Caco-2 (cell line): ENCODE measurements at regions of chr3 and their contacts with region 1.

Region 1: GRCh38 chr3:112990672-112991602 is at the start of gene GTPBP8:
- DNase-seq: peak; percentile 92 to 94
- H3K4me3 ChIP-seq: peak within 1 kb of the TSS; percentile 59
- H3K4me3 Mint-ChIP-seq: peak within 1 kb of the TSS; percentile 87
- H3K27ac Mint-ChIP-seq: peak within 1 kb of the TSS; percentile 94
- H3K4me1 ChIP-seq: peaks cover 16% of the 10 kb centered on the region; the same call in 1 of the 2 replicates
- H3K4me1 Mint-ChIP-seq: peaks cover 15% of the 10 kb centered on the region
- H3K27me3 ChIP-seq: no peaks in the 10 kb centered on the region
- H3K27me3 Mint-ChIP-seq: no peaks in the 10 kb centered on the region
- CTCF ChIP-seq: no peak
- total RNA-seq, gene GTPBP8: 18.3 and 19.5 TPM in 2 replicates

Region 2: GRCh38 chr3:112561731-112562688 is 428.9 kb before region 1 on chr3 and contains the starts of genes ATG3 and SLC35A5:
- CTCF ChIA-PET with region 1: no interaction called
- POLR2A ChIA-PET with region 1: no interaction called
- intact Hi-C with region 1: loop called (anchors 5 kb)
- DNase-seq: peak; percentile 98
- H3K4me3 ChIP-seq: peak within 1 kb of the TSS; percentile 92
- H3K4me3 Mint-ChIP-seq: peak within 1 kb of the TSS; percentile 95
- H3K27ac Mint-ChIP-seq: peak within 1 kb of the TSS; percentile 97
- H3K4me1 ChIP-seq: peaks cover 5% of the 10 kb centered on the region; the same call in 1 of the 2 replicates
- H3K4me1 Mint-ChIP-seq: peaks cover 28% of the 10 kb centered on the region
- H3K27me3 ChIP-seq: no peaks in the 10 kb centered on the region
- H3K27me3 Mint-ChIP-seq: no peaks in the 10 kb centered on the region
- CTCF ChIP-seq: peak in 1 of 2 experiments; percentile 13
- total RNA-seq, gene ATG3: 50.7 and 52.3 TPM in 2 replicates
- total RNA-seq, gene SLC35A5: 18.6 and 19.1 TPM in 2 replicates

Region 3: DNA sequence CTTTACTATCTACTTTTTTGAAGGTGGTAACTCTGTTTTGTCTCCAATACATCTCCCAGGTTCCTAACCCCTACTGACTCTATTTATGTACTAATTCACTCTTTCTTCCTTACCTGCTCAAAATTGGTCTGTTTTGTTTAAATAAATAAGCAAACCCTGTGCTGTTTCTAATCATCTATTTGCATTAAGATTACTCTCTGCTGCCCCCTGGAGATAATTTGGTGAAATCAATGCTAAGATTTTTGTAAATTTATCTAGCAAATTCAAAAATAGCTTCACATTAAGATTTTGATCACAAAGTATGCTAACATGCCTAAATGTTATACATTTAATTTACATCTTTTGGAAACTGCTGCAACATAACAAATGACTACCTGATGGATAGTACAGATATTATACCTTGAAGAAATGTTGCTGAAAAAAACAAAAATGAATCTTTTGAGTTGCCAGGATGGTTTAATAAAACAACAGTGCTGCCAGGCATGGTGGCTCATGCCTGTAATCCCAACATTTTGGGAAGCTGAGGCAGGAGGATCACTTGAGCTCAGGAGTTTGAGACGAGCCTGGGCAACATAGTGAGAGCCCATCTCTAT is 11.6 kb before region 1 on chr3:
- CTCF ChIA-PET with region 1: no interaction called
- POLR2A ChIA-PET with region 1: no interaction called
- intact Hi-C with region 1: no loop called
- DNase-seq: peak in 1 of 2 experiments; percentile 39
- H3K4me3 ChIP-seq: no peak overlapping the region
- H3K4me3 Mint-ChIP-seq: no peak overlapping the region
- H3K27ac Mint-ChIP-seq: no peak overlapping the region
- H3K4me1 ChIP-seq: no peaks in the 10 kb centered on the region
- H3K4me1 Mint-ChIP-seq: peaks cover 6% of the 10 kb centered on the region
- H3K27me3 ChIP-seq: no peaks in the 10 kb centered on the region
- H3K27me3 Mint-ChIP-seq: no peaks in the 10 kb centered on the region
- CTCF ChIP-seq: peak; percentile 55 to 76

Region 4: DNA sequence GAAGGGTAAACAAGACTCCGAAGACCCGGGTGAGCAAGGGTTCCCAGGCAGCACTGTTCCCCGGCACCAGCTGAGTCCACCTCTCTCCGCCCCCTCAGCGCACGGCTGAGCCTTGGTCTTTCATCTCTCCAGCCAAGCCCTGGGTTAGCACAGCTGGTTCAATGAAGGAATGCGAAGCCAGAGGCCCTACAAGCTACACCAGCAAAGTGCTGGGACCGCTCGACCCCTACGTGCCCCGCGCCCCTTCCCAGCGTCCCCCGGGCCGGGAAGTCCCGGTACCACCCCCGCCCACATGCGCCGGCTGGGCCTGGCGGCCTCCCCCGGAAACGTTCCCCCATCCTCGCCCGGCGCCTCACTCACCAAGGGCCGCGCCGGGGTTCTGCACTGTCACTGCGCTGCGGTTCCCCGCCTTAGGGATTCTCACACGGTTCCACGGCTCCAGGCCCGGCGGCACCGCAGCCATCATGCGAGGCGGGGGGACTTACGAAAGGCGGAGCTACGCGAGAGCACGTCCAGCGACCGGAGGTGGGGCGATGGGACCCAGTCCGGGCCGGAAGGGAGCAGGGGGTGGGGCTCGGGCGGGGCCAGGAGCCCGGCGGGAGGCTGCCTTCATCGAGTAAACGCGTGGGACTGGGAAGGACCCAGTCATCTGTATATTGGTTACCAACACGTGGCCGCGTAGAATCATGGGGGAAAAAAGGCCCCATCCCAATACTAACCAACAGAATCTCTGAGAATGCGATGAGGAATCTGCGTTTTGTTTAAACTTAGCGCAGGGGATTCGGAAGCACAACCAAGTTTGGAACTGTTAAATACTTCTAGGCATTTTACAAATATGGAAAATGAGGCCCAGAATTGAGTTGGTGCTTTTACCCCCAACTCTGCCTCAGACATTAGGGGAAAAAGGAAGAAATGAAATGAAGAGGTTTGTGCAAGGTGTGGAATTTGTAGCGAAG is 28.5 kb after region 1 on chr3:
- CTCF ChIA-PET with region 1: no interaction called
- POLR2A ChIA-PET with region 1: interaction called, 12 read pairs
- intact Hi-C with region 1: loop called (anchors 1 kb)
- DNase-seq: peak; percentile 89 to 93
- H3K4me3 ChIP-seq: peak overlapping the region; percentile 94
- H3K4me3 Mint-ChIP-seq: peak overlapping the region; percentile 96
- H3K27ac Mint-ChIP-seq: peak overlapping the region; percentile 93
- H3K4me1 ChIP-seq: 0 out of 2 replicates have a peak, but pooled peaks cover 4% of the 10 kb centered on the region
- H3K4me1 Mint-ChIP-seq: peaks cover 7% of the 10 kb centered on the region
- H3K27me3 ChIP-seq: no peaks in the 10 kb centered on the region
- H3K27me3 Mint-ChIP-seq: no peaks in the 10 kb centered on the region
- CTCF ChIP-seq: no peak